ENCODE measurements at regions of chr6 and their contacts with region 1.

Region 1: GRCh38 chr6:50128420-50129005 is 78.8 kb upstream of the DEFB112 start:
- DNase-seq: no peak
- H3K4me3 Mint-ChIP-seq: no peak overlapping the region
- H3K27ac Mint-ChIP-seq: no peak overlapping the region
- H3K4me1 Mint-ChIP-seq: no peaks in the 10 kb centered on the region
- H3K27me3 Mint-ChIP-seq: no peaks in the 10 kb centered on the region

Region 2: DNA sequence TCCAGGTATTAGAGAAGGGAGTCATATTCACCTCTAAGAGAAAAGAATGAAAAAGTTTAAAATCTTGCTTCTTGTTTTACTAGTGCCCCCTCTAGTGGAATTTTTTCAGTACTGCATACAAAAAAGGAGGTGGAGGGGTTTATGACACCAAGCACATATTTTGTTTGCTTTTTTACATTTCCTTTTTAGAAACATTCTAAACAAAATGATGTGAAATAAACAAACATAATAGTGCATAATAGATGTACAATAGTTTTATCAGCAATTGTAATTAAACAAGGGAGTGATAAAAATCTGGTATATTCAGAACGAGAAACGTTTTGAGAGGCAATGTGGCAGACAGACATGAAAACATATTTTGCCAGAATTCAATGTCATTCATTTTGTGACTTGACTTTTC is 473.8 kb after region 1 on chr6:
- intact Hi-C with region 1: loop called (anchors 5 kb)
- DNase-seq: no peak
- H3K4me3 Mint-ChIP-seq: no peak overlapping the region
- H3K27ac Mint-ChIP-seq: no peak overlapping the region
- H3K4me1 Mint-ChIP-seq: no peaks in the 10 kb centered on the region
- H3K27me3 Mint-ChIP-seq: no peaks in the 10 kb centered on the region

Region 3: GRCh38 chr6:50791900-50792508 is 663.5 kb after region 1 on chr6:
- intact Hi-C with region 1: loop called (anchors 5 kb)
- DNase-seq: no peak
- H3K4me3 Mint-ChIP-seq: no peak overlapping the region
- H3K27ac Mint-ChIP-seq: no peak overlapping the region
- H3K4me1 Mint-ChIP-seq: no peaks in the 10 kb centered on the region
- H3K27me3 Mint-ChIP-seq: no peaks in the 10 kb centered on the region

Measured in activated T-helper 2 cell treated with anti-CD3 and anti-CD28 coated beads, Interferon-gamma antibody, Interleukin-2, Interleukin-4, amounts not matched to agents 10 μg/mL and 5 μg/mL and 100 μg/mL, durations not matched to agents 14 hours and 24 hours and 36 hours (primary cell).